Common myeloid progenitor, CD34-positive (primary cell): ENCODE measurements at regions of chr3 and their contacts with region 1.

Region 1: DNA sequence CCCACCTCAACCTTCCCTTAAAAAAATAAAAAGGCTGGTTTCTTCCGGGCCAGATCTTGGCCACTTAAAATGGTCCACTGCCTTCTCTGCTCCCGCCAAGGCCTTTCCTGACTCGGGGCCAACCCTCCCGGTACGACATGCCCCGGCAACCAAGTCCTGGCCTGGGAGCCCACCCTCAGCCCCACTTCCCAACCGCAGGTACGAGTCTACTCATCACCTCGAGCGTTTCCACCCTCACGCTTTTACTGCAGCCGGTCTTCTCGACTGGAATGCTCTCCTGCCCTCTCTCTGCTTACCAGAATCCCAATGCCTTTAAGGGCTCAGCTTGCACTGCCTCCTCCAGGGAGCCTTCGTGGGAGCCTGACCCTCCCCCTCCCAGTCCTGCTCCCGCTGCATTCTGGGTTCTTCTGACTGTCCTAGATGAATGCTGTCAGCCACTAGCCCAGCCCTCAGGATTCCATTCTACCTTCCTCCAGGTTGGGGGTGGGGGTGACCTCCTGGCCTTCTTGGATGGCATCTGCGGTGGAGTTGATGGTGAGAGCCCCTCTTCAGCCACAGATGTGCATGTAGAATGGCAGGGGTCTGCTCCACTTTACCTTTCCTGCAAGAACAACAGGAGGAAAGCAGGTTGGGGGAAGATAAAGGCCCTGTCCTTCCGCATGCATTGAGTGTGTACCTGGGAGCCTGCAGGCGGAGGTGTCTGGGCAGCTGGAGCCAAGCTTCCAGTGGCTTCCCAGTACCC is 1.1 kb upstream of the CSRNP1 start:
- DNase-seq: no peak
- H3K4me3 ChIP-seq: no peak overlapping the region
- H3K27ac ChIP-seq: peak overlapping the region in 1 of 2 experiments; percentile 30
- H3K4me1 ChIP-seq: peaks cover 17 to 44% (median 36%) of the 10 kb centered on the region in 4 experiments
- H3K27me3 ChIP-seq: no peaks in the 10 kb centered on the region

Region 2: DNA sequence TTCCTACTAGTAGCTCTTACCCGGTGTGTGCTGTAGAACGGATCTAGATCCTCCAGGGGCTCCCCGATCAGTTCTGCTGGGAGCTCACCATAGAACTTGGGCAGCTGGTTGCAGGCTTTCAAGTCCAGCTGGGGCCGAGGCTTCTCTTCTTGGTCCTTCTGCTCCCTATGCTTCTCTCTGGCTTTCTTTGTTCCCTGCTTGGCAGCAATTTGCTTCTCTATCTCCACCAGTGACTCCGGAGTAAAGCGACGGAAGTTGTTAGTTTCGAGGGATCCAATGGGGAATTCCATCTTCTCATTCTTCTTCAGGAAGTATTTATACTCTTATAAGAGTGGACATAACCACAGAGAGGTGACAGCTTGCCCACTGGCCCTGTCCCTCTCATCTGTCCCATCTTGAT is 360.7 kb before region 1 on chr3:
- CTCF ChIA-PET with region 1: no interaction called
- POLR2A ChIA-PET with region 1: no interaction called
- DNase-seq: no peak
- H3K4me3 ChIP-seq: no peak overlapping the region
- H3K27ac ChIP-seq: no peak overlapping the region
- H3K4me1 ChIP-seq: no peaks in the 10 kb centered on the region
- H3K27me3 ChIP-seq: peaks cover 0 to 4% (median 0%) of the 10 kb centered on the region in 5 experiments

Region 3: GRCh38 chr3:39166134-39166731 is 11.8 kb after region 1 on chr3:
- CTCF ChIA-PET with region 1: interaction called, 32 read pairs
- POLR2A ChIA-PET with region 1: no interaction called
- DNase-seq: peak in 2 of 3 donors; percentile 49 to 53
- H3K4me3 ChIP-seq: no peak overlapping the region
- H3K27ac ChIP-seq: no peak overlapping the region
- H3K4me1 ChIP-seq: peaks cover 0 to 7% (median 4%) of the 10 kb centered on the region in 4 experiments
- H3K27me3 ChIP-seq: no peaks in the 10 kb centered on the region

Region 4: GRCh38 chr3:39249453-39250115 is 95.1 kb after region 1 on chr3:
- CTCF ChIA-PET with region 1: no interaction called
- POLR2A ChIA-PET with region 1: no interaction called
- DNase-seq: peak in 1 of 3 donors; percentile 50
- H3K4me3 ChIP-seq: peak overlapping the region in 4 of 7 experiments; percentile 33 to 64 (median 40)
- H3K27ac ChIP-seq: no peak overlapping the region
- H3K4me1 ChIP-seq: peaks cover 18 to 62% (median 51%) of the 10 kb centered on the region in 4 experiments
- H3K27me3 ChIP-seq: no peaks in the 10 kb centered on the region

Region 5: GRCh38 chr3:39383881-39384664 is 229.6 kb after region 1 on chr3:
- CTCF ChIA-PET with region 1: no interaction called
- POLR2A ChIA-PET with region 1: no interaction called
- DNase-seq: peak; percentile 92 to 97 (median 96)
- H3K4me3 ChIP-seq: peak overlapping the region; percentile 76 to 95 (median 85)
- H3K27ac ChIP-seq: peak overlapping the region; percentile 72 to 91
- H3K4me1 ChIP-seq: peaks cover 0 to 45% (median 30%) of the 10 kb centered on the region in 4 experiments
- H3K27me3 ChIP-seq: no peaks in the 10 kb centered on the region